ENCODE measurements at regions of chr1 and their contacts with region 1.

Region 1: DNA sequence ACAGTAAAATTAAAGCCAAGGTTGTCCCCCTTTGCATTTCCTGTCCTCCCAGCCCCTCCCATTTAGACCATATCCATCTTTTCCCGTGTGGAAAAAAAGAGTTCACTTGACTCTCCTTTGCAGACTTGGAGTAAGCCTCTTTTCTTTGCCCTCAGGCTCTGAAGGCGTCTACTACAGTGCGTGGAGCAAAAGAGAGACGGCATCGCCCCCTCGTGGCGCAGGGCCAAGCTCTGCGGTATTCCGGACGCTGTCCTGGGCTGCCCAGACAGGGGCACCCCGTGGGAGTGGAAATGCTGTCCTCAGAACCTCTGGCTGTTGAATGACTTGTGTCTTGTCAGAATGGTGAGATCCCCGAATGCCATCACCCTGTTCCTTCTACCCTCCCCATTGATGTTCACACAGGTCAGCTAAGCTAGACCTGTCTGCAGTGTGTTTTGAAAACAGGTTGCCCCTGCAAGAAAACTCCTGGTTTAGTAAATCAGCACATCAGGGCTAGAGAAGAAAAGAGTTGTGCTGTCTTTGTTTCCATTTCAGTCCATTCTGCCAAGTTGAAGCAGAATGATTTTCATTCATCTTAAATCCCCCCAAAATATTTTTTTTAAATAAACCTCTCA is 12.3 kb upstream of the GJA8 start:
- DNase-seq: peak; percentile 54
- CTCF ChIP-seq: peak; percentile 78

Region 2: DNA sequence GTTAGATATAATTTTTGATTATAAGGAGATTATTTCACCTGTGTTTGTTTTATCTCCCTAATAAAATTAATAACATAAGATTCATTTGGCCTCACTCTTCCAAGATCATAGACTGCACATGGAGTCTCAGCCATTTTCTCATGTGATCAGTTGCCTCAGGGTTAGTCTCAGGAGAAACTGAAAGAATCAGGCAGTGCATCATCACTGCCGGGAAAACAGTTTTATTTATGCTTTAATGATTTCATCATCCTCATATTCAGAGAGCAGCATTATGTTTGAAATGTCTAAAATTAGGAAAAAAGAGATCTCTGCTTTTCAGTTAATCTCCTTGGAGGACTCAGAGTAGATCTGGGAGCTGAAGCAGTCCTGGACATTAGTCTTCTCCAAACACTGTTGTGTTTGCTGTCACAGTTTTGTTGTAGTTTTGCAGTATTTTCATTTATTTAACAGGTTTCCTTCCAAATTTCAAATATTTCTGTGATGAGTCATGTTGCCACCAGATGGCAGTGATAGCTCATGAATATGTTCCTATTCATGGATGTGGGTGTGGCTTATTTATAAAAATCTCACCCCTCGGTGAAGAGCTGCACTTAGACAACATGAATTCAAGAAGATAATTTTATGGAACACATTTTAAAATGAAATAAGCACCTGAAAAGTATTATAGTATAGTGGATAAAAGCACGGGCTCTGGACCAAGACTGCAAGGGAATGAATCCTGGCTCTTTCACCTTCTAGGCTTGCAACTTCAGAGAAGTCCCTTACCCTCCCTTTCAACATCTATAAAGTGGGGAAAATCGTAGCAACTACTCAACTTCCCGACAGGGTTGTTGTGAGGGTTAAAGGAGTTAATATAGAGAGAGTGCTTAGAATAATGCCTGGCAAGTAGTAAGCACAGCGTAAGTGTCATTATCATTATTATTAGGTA is 616.6 kb before region 1 on chr1:
- CTCF ChIA-PET with region 1: interaction called, 16 read pairs
- POLR2A ChIA-PET with region 1: no interaction called
- DNase-seq: peak; percentile 57
- CTCF ChIP-seq: peak; percentile 56

Region 3: GRCh38 chr1:147494998-147495580 is 395.2 kb before region 1 on chr1:
- CTCF ChIA-PET with region 1: interaction called, 18 read pairs
- POLR2A ChIA-PET with region 1: no interaction called
- DNase-seq: peak; percentile 69
- CTCF ChIP-seq: peak; percentile 91

Region 4: DNA sequence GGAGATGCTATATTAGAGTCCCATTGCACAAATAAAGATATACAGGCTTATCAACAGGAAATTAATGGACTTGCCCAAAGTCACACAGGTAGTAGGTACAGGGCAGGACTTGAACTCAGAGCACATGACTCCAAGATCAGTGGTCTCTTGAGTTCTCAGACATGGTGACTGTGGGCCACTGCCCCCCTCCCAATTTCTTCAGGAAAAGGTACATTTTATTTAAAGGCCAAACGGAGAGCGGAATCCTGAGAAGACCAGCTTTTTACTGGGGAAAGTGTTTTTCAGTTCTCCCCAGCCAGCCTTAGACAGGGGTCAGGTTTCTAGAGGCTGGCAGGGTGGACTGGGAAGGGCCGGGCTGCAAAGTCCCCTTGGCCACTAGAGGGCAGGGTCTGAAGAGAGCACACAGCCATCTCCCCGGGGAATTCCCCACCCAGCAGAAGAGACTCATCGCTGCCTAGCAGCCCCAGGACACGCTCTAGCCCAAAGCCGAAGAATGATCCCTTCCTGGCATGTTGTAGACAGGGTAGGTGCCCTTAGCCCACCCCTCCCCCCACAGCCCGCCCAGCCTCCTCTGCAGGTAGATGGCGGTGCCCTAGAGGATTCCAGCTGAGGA is 249.6 kb before region 1 on chr1:
- CTCF ChIA-PET with region 1: interaction called, 13 read pairs
- POLR2A ChIA-PET with region 1: no interaction called
- DNase-seq: peak; percentile 89
- CTCF ChIP-seq: peak; percentile 89

Region 5: GRCh38 chr1:147781056-147781471 is 109.2 kb before region 1 on chr1:
- CTCF ChIA-PET with region 1: no interaction called
- POLR2A ChIA-PET with region 1: no interaction called
- DNase-seq: no peak
- CTCF ChIP-seq: no peak

Region 6: DNA sequence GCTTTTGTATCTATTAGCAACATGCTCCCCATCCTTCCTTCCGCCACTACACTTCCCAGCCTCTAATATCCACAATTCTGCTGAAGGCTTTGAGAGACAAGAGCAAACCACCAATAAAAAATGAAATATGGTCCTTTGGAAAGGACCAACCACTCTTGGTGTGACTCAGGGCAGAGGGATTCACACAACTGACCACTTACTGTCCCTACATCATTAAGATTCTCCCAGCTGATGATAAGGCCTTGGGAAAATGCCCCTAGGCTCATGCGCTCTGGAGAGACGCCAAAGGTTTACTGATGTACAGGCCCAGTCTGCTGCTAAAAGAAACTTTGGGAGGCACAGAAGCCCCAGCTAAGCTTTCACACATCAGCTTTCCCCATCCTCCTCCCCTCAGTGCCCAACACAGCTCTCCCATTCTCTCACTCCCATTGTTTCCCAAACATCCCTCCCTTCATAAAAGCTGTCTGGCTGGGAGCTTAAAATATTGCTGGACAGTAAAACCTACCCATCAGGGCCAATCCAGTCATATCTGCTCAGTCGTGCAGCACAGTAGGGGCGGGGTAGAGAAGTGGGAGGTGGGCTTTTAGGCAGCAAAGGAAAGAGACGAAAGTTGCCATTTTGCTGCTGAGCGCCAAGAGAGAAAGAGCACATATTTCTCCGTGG is 12.0 kb after region 1 on chr1 and contains the start of gene GJA8:
- CTCF ChIA-PET with region 1: interaction called, 76 read pairs
- POLR2A ChIA-PET with region 1: no interaction called
- DNase-seq: no peak
- CTCF ChIP-seq: no peak

Region 7: GRCh38 chr1:147912553-147912952 is 22.3 kb after region 1 on chr1:
- CTCF ChIA-PET with region 1: interaction called, 76 read pairs
- POLR2A ChIA-PET with region 1: no interaction called
- DNase-seq: no peak
- CTCF ChIP-seq: no peak

Measured in GM10248 (cell line).